PC-3 (cell line): ENCODE measurements at regions of chr17 and their contacts with region 1.

Region 1: DNA sequence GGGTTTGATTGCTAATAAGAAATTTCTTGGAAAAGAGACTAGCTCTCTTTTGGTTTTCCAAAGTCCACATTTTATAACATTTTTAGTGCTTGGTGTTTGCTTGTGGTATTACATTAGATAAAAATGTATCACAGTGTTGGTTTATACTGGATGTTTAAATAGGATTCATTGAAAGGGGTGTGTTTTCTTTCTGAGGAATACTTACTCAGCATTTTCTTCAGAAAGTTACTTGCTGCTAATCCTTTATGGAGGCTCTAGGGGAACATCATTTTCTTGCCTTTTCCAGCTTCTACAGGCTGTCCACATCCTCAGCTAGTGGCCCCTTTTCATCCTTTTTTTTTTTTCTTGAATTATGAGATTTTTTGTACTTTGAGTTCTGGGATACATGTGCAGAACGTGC is 833 bp upstream of the KRT39 start:
- DNase-seq: no peak
- ATAC-seq: no peak
- H3K4me3 ChIP-seq: no peak overlapping the region
- H3K27ac ChIP-seq: no peak overlapping the region
- H3K4me1 ChIP-seq: no peaks in the 10 kb centered on the region
- H3K27me3 ChIP-seq: no peaks in the 10 kb centered on the region
- CTCF ChIP-seq: no peak

Region 2: DNA sequence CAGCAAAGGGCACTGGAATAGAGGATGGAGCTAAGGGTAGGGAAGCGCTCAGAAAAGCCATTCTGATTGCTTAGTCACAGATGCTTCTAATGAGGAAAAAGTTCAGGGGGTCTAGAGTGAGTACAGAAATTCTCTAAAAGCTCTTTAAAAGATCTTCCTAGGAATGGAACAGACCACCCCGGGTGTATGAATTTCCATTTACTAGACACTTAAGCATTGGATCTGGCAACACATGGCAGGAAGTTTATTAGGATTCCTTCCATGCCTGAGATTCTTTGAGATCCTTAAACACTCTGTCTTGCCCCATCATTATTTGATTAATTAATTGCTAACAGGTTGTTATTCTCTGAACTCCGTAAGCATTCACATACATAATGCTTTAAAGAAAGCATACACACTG is 316.5 kb after region 1 on chr17:
- CTCF ChIA-PET with region 1: no interaction called
- POLR2A ChIA-PET with region 1: interaction called, 13 read pairs
- intact Hi-C with region 1: no loop called
- DNase-seq: no peak
- ATAC-seq: no peak
- H3K4me3 ChIP-seq: no peak overlapping the region
- H3K27ac ChIP-seq: no peak overlapping the region
- H3K4me1 ChIP-seq: no peaks in the 10 kb centered on the region
- H3K27me3 ChIP-seq: no peaks in the 10 kb centered on the region
- CTCF ChIP-seq: no peak